ENCODE measurements at regions of chr1 and their contacts with region 1.

Region 1: GRCh38 chr1:162847839-162848453 is 13.0 kb downstream of the CCDC190 start:
- DNase-seq: peak; percentile 53
- ATAC-seq: no peak
- H3K4me3 Mint-ChIP-seq: no peak overlapping the region
- H3K27ac Mint-ChIP-seq: no peak overlapping the region
- H3K4me1 Mint-ChIP-seq: no peaks in the 10 kb centered on the region
- H3K27me3 Mint-ChIP-seq: peaks cover 15% of the 10 kb centered on the region
- CTCF ChIP-seq: peak; percentile 68

Region 2: DNA sequence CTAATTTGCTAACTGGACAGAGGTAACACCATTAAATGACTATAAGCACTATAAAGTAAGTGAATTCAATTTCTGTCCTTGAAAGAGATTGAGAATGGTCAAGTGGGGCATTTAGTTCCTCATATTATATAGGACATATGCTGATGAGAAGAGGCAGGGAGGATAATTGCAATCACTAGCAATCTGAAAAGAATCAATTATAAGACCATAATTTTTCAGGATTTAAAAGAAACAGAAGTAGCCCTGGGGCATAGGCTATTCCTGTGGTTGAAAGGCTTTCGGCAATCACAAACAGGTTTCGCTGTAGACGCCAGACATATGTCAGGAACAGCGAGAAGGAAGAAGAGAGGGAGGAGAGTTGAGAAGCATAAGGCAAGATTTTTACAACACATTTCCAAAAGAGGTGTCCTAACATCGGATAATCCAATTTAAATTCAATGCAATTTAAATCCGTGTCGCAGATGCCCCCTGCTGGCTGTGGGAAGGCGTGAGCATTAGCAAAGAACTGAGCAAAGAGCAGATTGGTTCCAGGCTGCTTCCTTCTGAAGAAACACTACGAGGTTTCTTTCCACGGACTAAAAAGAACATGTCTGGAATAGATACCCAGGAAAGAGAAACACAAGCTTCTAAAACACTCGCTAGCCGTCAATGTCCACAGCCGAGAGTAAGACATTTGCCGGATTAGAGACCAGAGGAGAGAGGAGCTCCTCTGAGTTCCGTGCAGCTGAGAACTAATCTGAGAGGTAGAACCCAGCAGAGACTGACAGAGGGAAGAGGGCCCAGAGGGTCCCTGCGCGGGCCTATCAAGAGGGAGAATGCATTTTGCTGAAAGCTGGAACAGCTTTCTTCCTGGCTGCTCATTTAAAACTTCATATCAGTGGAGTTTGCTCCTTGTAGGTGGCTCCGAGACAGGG is 326.8 kb after region 1 on chr1:
- CTCF ChIA-PET with region 1: interaction called, 7 read pairs
- POLR2A ChIA-PET with region 1: no interaction called
- intact Hi-C with region 1: loop called (anchors 1 kb)
- DNase-seq: no peak
- ATAC-seq: no peak
- H3K4me3 Mint-ChIP-seq: no peak overlapping the region
- H3K27ac Mint-ChIP-seq: no peak overlapping the region
- H3K4me1 Mint-ChIP-seq: no peaks in the 10 kb centered on the region
- H3K27me3 Mint-ChIP-seq: peaks cover 2% of the 10 kb centered on the region
- CTCF ChIP-seq: no peak

Measured in activated B cell treated with CpG ODN at 0.5 μM for 24 hours (primary cell).